CD8-positive, alpha-beta T cell (primary cell): ENCODE measurements at regions of chr16 and their contacts with region 1.

Region 1: GRCh38 chr16:57185944-57186871 is at the starts of genes PSME3IP1 and RSPRY1:
- DNase-seq: peak; percentile 96 to 100 (median 98)
- ATAC-seq: peak; percentile 82
- H3K4me3 ChIP-seq: peak within 1 kb of the TSS; percentile 92 to 100
- H3K4me3 Mint-ChIP-seq: peak within 1 kb of the TSS; percentile 99
- H3K27ac ChIP-seq: peak within 1 kb of the TSS; percentile 84 to 94
- H3K27ac Mint-ChIP-seq: peak within 1 kb of the TSS; percentile 98
- H3K4me1 ChIP-seq: peaks cover 34% of the 10 kb centered on the region
- H3K4me1 Mint-ChIP-seq: peaks cover 58% of the 10 kb centered on the region
- H3K27me3 ChIP-seq: no peaks in the 10 kb centered on the region
- H3K27me3 Mint-ChIP-seq: no peaks in the 10 kb centered on the region
- CTCF ChIP-seq: no peak
- total RNA-seq, gene PSME3IP1: 82.6 to 87.2 TPM
- total RNA-seq, gene RSPRY1: 22.4 to 23.2 TPM

Region 2: DNA sequence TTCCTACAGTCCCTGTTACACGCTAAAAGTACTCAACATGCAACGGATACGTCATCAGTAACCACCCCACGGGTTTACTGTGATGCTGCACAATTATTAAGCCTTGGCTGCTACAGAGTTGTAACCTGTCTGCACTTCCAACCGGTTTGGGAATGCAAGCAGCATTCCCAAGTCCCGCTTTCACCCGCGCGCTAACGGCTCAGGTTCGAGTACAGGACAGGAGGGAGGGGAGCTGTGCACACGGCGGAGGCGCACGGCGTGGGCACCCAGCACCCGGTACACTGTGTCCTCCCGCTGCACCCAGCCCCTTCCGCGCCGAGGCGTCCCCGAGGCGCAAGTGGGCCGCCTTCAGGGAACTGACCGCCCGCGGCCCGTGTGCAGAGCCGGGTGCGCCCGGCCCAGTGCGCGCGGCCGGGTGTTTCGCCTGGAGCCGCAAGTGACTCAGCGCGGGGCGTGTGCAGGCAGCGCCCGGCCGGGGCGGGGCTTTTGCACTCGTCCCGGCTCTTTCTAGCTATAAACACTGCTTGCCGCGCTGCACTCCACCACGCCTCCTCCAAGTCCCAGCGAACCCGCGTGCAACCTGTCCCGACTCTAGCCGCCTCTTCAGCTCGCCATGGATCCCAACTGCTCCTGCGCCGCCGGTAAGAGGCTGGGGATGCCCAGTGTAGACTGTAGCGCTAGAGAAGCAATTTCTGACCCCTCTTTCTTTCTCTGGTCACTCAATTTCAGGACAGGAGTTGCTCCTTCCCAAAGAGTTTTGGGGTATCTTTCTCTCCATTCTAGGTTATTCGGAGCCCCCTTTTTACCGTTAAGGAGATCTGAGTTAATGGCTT is 577.9 kb before region 1 on chr16 and contains the start of gene MT2A:
- CTCF ChIA-PET with region 1: no interaction called
- POLR2A ChIA-PET with region 1: no interaction called
- intact Hi-C with region 1: loop called in 1 of 2 experiments (anchors 10 kb)
- DNase-seq: peak; percentile 68 to 94 (median 88)
- ATAC-seq: peak; percentile 75
- H3K4me3 ChIP-seq: peak within 1 kb of the TSS; percentile 91 to 95
- H3K4me3 Mint-ChIP-seq: peak within 1 kb of the TSS; percentile 98
- H3K27ac ChIP-seq: peak within 1 kb of the TSS; percentile 68 to 98
- H3K27ac Mint-ChIP-seq: peak within 1 kb of the TSS; percentile 94
- H3K4me1 ChIP-seq: peaks cover 37% of the 10 kb centered on the region
- H3K4me1 Mint-ChIP-seq: peaks cover 47% of the 10 kb centered on the region
- H3K27me3 ChIP-seq: no peaks in the 10 kb centered on the region
- H3K27me3 Mint-ChIP-seq: no peaks in the 10 kb centered on the region
- CTCF ChIP-seq: no peak
- total RNA-seq, gene MT2A: 71.0 to 95.7 TPM

Region 3: DNA sequence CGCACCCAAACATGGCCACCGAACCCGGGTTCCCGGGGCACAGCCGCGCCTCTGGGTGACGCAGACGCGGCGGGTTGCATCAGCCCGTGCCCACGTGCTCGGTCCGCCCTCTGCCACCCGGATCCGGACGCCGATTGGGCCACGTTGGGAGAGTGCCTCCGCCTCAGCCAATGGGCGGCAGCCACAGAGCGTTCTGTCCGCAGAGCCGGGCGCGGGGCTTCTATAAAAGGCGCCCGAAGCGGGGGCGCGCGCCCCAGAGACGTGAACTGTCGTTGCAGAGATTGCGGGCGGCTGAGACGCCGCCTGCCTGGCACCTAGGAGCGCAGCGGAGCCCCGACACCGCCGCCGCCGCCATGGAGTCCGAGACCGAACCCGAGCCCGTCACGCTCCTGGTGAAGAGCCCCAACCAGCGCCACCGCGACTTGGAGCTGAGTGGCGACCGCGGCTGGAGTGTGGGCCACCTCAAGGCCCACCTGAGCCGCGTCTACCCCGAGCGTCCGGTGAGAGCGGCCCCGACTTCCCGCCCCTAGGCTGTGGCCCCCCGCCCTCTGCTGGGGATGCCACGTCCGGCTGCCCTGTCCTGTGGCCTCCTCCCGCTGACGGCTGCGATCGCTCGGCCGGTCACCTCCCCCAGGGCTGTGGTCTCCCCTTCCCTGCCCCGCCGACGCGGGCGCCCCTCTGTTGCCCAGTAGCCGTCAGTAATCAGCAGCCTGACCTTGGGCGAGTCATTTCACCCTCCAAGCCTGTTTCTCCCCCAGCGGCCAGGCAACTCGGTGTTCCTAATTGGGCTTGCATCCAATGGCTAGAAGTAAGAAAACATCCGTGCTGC is 254.1 kb before region 1 on chr16 and contains the start of gene HERPUD1:
- CTCF ChIA-PET with region 1: no interaction called
- POLR2A ChIA-PET with region 1: interaction called, 6 read pairs
- intact Hi-C with region 1: loop called in 1 of 2 experiments (anchors 1 kb)
- DNase-seq: peak; percentile 98 to 99 (median 99)
- ATAC-seq: peak; percentile 94
- H3K4me3 ChIP-seq: peak within 1 kb of the TSS; percentile 96 to 99
- H3K4me3 Mint-ChIP-seq: peak within 1 kb of the TSS; percentile 98
- H3K27ac ChIP-seq: peak within 1 kb of the TSS; percentile 83 to 95
- H3K27ac Mint-ChIP-seq: peak within 1 kb of the TSS; percentile 98
- H3K4me1 ChIP-seq: peaks cover 16% of the 10 kb centered on the region
- H3K4me1 Mint-ChIP-seq: peaks cover 44% of the 10 kb centered on the region
- H3K27me3 ChIP-seq: no peaks in the 10 kb centered on the region
- H3K27me3 Mint-ChIP-seq: no peaks in the 10 kb centered on the region
- CTCF ChIP-seq: no peak
- total RNA-seq, gene HERPUD1: 191 to 201 TPM

Region 4: GRCh38 chr16:57134982-57135381 is 51.2 kb before region 1 on chr16:
- CTCF ChIA-PET with region 1: no interaction called
- POLR2A ChIA-PET with region 1: interaction called, 10 read pairs
- intact Hi-C with region 1: no loop called
- DNase-seq: peak in 8 of 9 experiments; percentile 22 to 76 (median 48)
- ATAC-seq: peak; percentile 65
- H3K4me3 ChIP-seq: peak overlapping the region; percentile 48 to 55
- H3K4me3 Mint-ChIP-seq: peak overlapping the region; percentile 82
- H3K27ac ChIP-seq: peak overlapping the region; percentile 34 to 82
- H3K27ac Mint-ChIP-seq: peak overlapping the region; percentile 97
- H3K4me1 ChIP-seq: peaks cover 71% of the 10 kb centered on the region
- H3K4me1 Mint-ChIP-seq: peaks cover 89% of the 10 kb centered on the region
- H3K27me3 ChIP-seq: no peaks in the 10 kb centered on the region
- H3K27me3 Mint-ChIP-seq: no peaks in the 10 kb centered on the region
- CTCF ChIP-seq: no peak

Region 5: GRCh38 chr16:57252148-57252721 is 66.0 kb after region 1 on chr16:
- CTCF ChIA-PET with region 1: no interaction called
- POLR2A ChIA-PET with region 1: no interaction called
- intact Hi-C with region 1: no loop called
- DNase-seq: peak in 1 of 9 experiments; percentile 45
- ATAC-seq: no peak
- H3K4me3 ChIP-seq: no peak overlapping the region
- H3K4me3 Mint-ChIP-seq: no peak overlapping the region
- H3K27ac ChIP-seq: no peak overlapping the region
- H3K27ac Mint-ChIP-seq: no peak overlapping the region
- H3K4me1 ChIP-seq: no peaks in the 10 kb centered on the region
- H3K4me1 Mint-ChIP-seq: peaks cover 2% of the 10 kb centered on the region
- H3K27me3 ChIP-seq: no peaks in the 10 kb centered on the region
- H3K27me3 Mint-ChIP-seq: no peaks in the 10 kb centered on the region
- CTCF ChIP-seq: no peak

Region 6: GRCh38 chr16:57422026-57422944 is 236.1 kb after region 1 on chr16:
- CTCF ChIA-PET with region 1: interaction called, 4 read pairs
- POLR2A ChIA-PET with region 1: no interaction called
- intact Hi-C with region 1: loop called in 1 of 2 experiments (anchors 1 kb)
- DNase-seq: no peak
- ATAC-seq: no peak
- H3K4me3 ChIP-seq: no peak overlapping the region
- H3K4me3 Mint-ChIP-seq: no peak overlapping the region
- H3K27ac ChIP-seq: no peak overlapping the region
- H3K27ac Mint-ChIP-seq: no peak overlapping the region
- H3K4me1 ChIP-seq: peaks cover 18% of the 10 kb centered on the region
- H3K4me1 Mint-ChIP-seq: peaks cover 19% of the 10 kb centered on the region
- H3K27me3 ChIP-seq: no peaks in the 10 kb centered on the region
- H3K27me3 Mint-ChIP-seq: no peaks in the 10 kb centered on the region
- CTCF ChIP-seq: no peak

Region 7: GRCh38 chr16:57462209-57462977 is 276.2 kb after region 1 on chr16 and contains the start of gene POLR2C:
- CTCF ChIA-PET with region 1: no interaction called
- POLR2A ChIA-PET with region 1: no interaction called
- intact Hi-C with region 1: loop called in 1 of 2 experiments (anchors 5 kb)
- DNase-seq: peak; percentile 90 to 98 (median 94)
- ATAC-seq: peak; percentile 97
- H3K4me3 ChIP-seq: peak within 1 kb of the TSS; percentile 83 to 85
- H3K4me3 Mint-ChIP-seq: peak within 1 kb of the TSS; percentile 99
- H3K27ac ChIP-seq: peak within 1 kb of the TSS; percentile 49 to 62
- H3K27ac Mint-ChIP-seq: peak within 1 kb of the TSS; percentile 98
- H3K4me1 ChIP-seq: peaks cover 21% of the 10 kb centered on the region
- H3K4me1 Mint-ChIP-seq: peaks cover 35% of the 10 kb centered on the region
- H3K27me3 ChIP-seq: no peaks in the 10 kb centered on the region
- H3K27me3 Mint-ChIP-seq: no peaks in the 10 kb centered on the region
- CTCF ChIP-seq: peak; percentile 95
- total RNA-seq, gene POLR2C: 101 to 112 TPM

Region 8: DNA sequence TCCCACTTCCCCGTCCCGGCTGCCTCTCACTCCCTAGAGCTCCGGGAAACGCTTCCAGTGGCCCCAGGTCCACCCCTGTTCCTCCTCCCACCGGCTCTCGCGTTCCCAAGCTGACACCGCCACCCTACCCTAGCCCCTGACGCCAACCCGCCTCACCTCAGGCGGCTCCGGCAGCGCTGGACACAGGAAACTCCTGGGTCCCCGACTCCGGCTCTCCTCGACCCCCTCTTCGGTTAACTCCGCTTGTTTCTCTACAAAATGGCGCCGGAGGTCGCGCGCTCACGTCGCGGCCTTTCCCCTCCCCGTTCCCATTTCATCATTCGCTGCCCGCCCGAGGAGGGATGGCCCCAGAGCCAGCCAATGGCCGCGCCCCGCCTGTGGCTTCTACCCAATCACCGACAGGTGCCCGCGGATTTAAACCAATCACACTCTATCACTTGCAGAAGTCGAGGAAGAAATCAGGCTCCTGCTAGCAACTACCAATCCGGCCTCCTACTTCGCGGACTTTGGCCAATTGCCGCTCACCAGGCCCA is 1443.4 kb after region 1 on chr16 and contains the start of gene CNOT1:
- CTCF ChIA-PET with region 1: no interaction called
- POLR2A ChIA-PET with region 1: no interaction called
- intact Hi-C with region 1: loop called in 1 of 2 experiments (anchors 5 kb)
- DNase-seq: peak; percentile 95 to 99 (median 97)
- ATAC-seq: peak; percentile 78
- H3K4me3 ChIP-seq: peak within 1 kb of the TSS; percentile 93
- H3K4me3 Mint-ChIP-seq: peak within 1 kb of the TSS; percentile 100
- H3K27ac ChIP-seq: peak within 1 kb of the TSS; percentile 91 to 98
- H3K27ac Mint-ChIP-seq: peak within 1 kb of the TSS; percentile 100
- H3K4me1 ChIP-seq: peaks cover 18% of the 10 kb centered on the region
- H3K4me1 Mint-ChIP-seq: peaks cover 30% of the 10 kb centered on the region
- H3K27me3 ChIP-seq: no peaks in the 10 kb centered on the region
- H3K27me3 Mint-ChIP-seq: no peaks in the 10 kb centered on the region
- CTCF ChIP-seq: no peak
- total RNA-seq, gene CNOT1: 165 to 177 TPM